ENCODE measurements at regions of chr5 and their contacts with region 1.

Region 1: GRCh38 chr5:145124806-145125205 is 710.3 kb downstream of the PRELID2 start:
- DNase-seq: no peak
- H3K4me3 ChIP-seq: no peak overlapping the region
- H3K27ac ChIP-seq: no peak overlapping the region
- H3K4me1 ChIP-seq: no peaks in the 10 kb centered on the region
- H3K27me3 ChIP-seq: no peaks in the 10 kb centered on the region
- CTCF ChIP-seq: no peak

Region 2: GRCh38 chr5:144941004-144941403 is 183.8 kb before region 1 on chr5:
- intact Hi-C with region 1: no loop called
- DNase-seq: no peak
- H3K4me3 ChIP-seq: no peak overlapping the region
- H3K27ac ChIP-seq: no peak overlapping the region
- H3K4me1 ChIP-seq: no peaks in the 10 kb centered on the region
- H3K27me3 ChIP-seq: no peaks in the 10 kb centered on the region
- CTCF ChIP-seq: no peak

Region 3: DNA sequence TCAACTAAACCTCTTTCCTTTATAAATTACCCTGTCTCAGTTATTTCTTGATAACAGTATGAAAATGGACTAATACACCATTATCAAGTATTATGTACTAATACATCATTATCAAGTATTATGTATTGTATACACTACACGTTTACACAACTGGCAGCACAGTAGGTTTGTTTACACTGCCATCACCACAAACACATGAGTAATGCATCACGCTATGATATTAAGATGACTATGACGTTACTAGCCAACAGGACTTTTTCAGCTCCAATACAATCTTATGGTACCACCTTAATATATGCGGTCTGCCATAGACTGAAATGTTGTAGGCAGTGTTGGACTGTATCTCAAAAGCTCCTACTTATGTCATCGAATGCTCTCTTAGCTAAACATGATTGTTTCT is 682.1 kb after region 1 on chr5:
- intact Hi-C with region 1: loop called (anchors 5 kb)
- DNase-seq: no peak
- H3K4me3 ChIP-seq: no peak overlapping the region
- H3K27ac ChIP-seq: no peak overlapping the region
- H3K4me1 ChIP-seq: no peaks in the 10 kb centered on the region
- H3K27me3 ChIP-seq: no peaks in the 10 kb centered on the region
- CTCF ChIP-seq: no peak

Measured in tibial artery (tissue), 4 donors.